ENCODE measurements at regions of chr3 and their contacts with region 1.

Region 1: GRCh38 chr3:50611464-50612233 is at the start of gene CISH:
- DNase-seq: peak; percentile 90 to 92 (median 92)
- H3K4me3 ChIP-seq: peak within 1 kb of the TSS; percentile 98
- H3K4me3 Mint-ChIP-seq: peak within 1 kb of the TSS; percentile 82 to 97 (median 97)
- H3K27ac ChIP-seq: peak within 1 kb of the TSS; percentile 84
- H3K27ac Mint-ChIP-seq: peak within 1 kb of the TSS; percentile 91 to 99 (median 95)
- H3K4me1 ChIP-seq: peaks cover 61% of the 10 kb centered on the region
- H3K4me1 Mint-ChIP-seq: peaks cover 69 to 81% (median 73%) of the 10 kb centered on the region in 3 donors
- H3K27me3 ChIP-seq: no peaks in the 10 kb centered on the region
- H3K27me3 Mint-ChIP-seq: no peaks in the 10 kb centered on the region
- total RNA-seq, gene CISH: 216 to 222 TPM

Region 2: GRCh38 chr3:50568947-50569749 is 42.5 kb before region 1 on chr3 and contains the start of gene HEMK1:
- CTCF ChIA-PET with region 1: interaction called, 724 read pairs
- POLR2A ChIA-PET with region 1: interaction called, 57 read pairs
- DNase-seq: peak; percentile 92 to 95 (median 92)
- H3K4me3 ChIP-seq: peak within 1 kb of the TSS; percentile 92
- H3K4me3 Mint-ChIP-seq: peak within 1 kb of the TSS; percentile 90 to 97 (median 95)
- H3K27ac ChIP-seq: peak within 1 kb of the TSS; percentile 82
- H3K27ac Mint-ChIP-seq: peak within 1 kb of the TSS; percentile 91 to 98 (median 96)
- H3K4me1 ChIP-seq: peaks cover 67% of the 10 kb centered on the region
- H3K4me1 Mint-ChIP-seq: peaks cover 54 to 85% (median 58%) of the 10 kb centered on the region in 3 donors
- H3K27me3 ChIP-seq: no peaks in the 10 kb centered on the region
- H3K27me3 Mint-ChIP-seq: peaks cover 0 to 4% of the 10 kb centered on the region in 2 donors
- total RNA-seq, gene HEMK1: 51.8 to 55.0 TPM

Region 3: DNA sequence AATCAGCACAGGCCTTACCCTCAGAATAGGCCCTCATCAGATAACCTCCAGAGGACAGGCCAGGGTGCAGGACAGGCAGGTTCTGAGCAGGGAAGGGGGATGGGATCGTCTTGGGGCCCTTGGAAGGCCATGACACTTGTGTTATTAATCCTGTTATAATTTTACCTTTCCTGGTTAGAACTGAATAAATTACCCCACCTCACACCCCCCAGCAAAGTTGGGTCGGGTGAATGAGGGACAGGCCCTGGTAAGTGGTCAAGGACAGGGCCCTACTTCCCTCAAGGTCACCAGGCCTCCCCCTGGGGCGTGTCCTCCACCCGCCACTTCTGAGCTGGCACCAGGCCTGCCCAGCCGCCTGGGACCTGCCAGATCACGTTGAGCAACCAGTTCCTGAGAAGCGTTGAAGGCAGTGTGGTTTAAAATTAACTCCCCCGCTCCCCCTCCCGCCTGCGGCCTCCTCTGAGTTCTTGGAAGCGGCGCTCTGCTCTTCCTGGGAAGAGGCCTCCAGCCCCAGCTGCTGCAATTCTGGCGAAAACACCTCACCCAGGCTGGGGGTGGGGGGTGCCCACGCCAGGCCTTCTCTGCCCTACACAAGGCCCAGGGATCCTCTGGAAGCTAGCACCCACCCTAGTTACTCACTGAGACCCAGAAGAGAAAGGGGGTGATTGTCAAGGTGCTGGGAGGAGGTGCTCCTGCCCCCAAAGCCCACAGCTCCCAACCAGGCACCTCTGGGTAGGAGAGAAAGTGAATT is 10.6 kb before region 1 on chr3:
- CTCF ChIA-PET with region 1: interaction called, 33 read pairs
- POLR2A ChIA-PET with region 1: interaction called, 35 read pairs
- DNase-seq: peak; percentile 52 to 79 (median 57)
- H3K4me3 ChIP-seq: peak overlapping the region; percentile 26
- H3K4me3 Mint-ChIP-seq: peak overlapping the region; percentile 48 to 81 (median 76)
- H3K27ac ChIP-seq: peak overlapping the region; percentile 84
- H3K27ac Mint-ChIP-seq: peak overlapping the region; percentile 90 to 98 (median 96)
- H3K4me1 ChIP-seq: peaks cover 79% of the 10 kb centered on the region
- H3K4me1 Mint-ChIP-seq: peaks cover 68 to 83% (median 78%) of the 10 kb centered on the region in 3 donors
- H3K27me3 ChIP-seq: no peaks in the 10 kb centered on the region
- H3K27me3 Mint-ChIP-seq: no peaks in the 10 kb centered on the region

Region 4: GRCh38 chr3:50632450-50632849 is 20.8 kb after region 1 on chr3:
- CTCF ChIA-PET with region 1: interaction called, 15 read pairs
- POLR2A ChIA-PET with region 1: interaction called, 4 read pairs
- DNase-seq: no peak
- H3K4me3 ChIP-seq: no peak overlapping the region
- H3K4me3 Mint-ChIP-seq: peak overlapping the region in 6 of 7 donors; percentile 6 to 76 (median 26)
- H3K27ac ChIP-seq: no peak overlapping the region
- H3K27ac Mint-ChIP-seq: peak overlapping the region; percentile 27 to 89 (median 82)
- H3K4me1 ChIP-seq: peaks cover 77% of the 10 kb centered on the region
- H3K4me1 Mint-ChIP-seq: peaks cover 73 to 90% (median 83%) of the 10 kb centered on the region in 3 donors
- H3K27me3 ChIP-seq: no peaks in the 10 kb centered on the region
- H3K27me3 Mint-ChIP-seq: no peaks in the 10 kb centered on the region

Region 5: DNA sequence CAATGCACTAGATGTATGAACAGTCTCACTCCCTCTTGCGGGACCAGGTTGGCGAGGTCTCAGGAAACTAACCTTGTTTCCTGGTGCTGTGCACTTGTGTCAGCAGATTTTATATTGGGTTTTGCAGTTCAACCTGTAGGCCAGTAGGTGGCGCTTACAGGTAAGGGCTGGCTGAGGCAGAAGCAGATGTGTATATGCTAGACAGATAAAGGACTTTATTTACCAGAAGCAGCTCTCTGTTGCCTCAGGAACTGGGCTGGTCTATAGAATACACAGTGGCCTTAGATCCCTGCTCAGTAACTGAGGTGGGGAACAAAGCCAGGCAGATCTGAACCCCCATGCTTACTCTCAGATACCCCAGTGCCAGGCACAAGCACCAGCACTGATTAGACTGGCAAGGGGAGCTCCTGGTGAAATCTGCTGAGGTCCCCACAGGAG is 359.9 kb after region 1 on chr3:
- CTCF ChIA-PET with region 1: interaction called, 11 read pairs
- POLR2A ChIA-PET with region 1: no interaction called
- DNase-seq: peak; percentile 28 to 74 (median 72)
- H3K4me3 ChIP-seq: no peak overlapping the region
- H3K4me3 Mint-ChIP-seq: peak overlapping the region in 3 of 7 donors; percentile 16 to 56 (median 28)
- H3K27ac ChIP-seq: no peak overlapping the region
- H3K27ac Mint-ChIP-seq: peak overlapping the region in 5 of 8 donors; percentile 40 to 79 (median 77)
- H3K4me1 ChIP-seq: peaks cover 14% of the 10 kb centered on the region
- H3K4me1 Mint-ChIP-seq: peaks cover 21 to 24% (median 24%) of the 10 kb centered on the region in 3 donors
- H3K27me3 ChIP-seq: no peaks in the 10 kb centered on the region
- H3K27me3 Mint-ChIP-seq: no peaks in the 10 kb centered on the region

Region 6: GRCh38 chr3:51391075-51391567 is 779.5 kb after region 1 on chr3 and contains the start of gene RBM15B:
- CTCF ChIA-PET with region 1: interaction called, 12 read pairs
- POLR2A ChIA-PET with region 1: no interaction called
- DNase-seq: peak; percentile 96 to 98 (median 97)
- H3K4me3 ChIP-seq: peak within 1 kb of the TSS; percentile 56
- H3K4me3 Mint-ChIP-seq: peak within 1 kb of the TSS; percentile 79 to 93 (median 83)
- H3K27ac ChIP-seq: peak within 1 kb of the TSS; percentile 61
- H3K27ac Mint-ChIP-seq: peak within 1 kb of the TSS; percentile 88 to 96 (median 92)
- H3K4me1 ChIP-seq: peaks cover 71% of the 10 kb centered on the region
- H3K4me1 Mint-ChIP-seq: peaks cover 54 to 81% (median 66%) of the 10 kb centered on the region in 3 donors
- H3K27me3 ChIP-seq: no peaks in the 10 kb centered on the region
- H3K27me3 Mint-ChIP-seq: no peaks in the 10 kb centered on the region
- total RNA-seq, gene RBM15B: 47.4 to 47.8 TPM

Region 7: DNA sequence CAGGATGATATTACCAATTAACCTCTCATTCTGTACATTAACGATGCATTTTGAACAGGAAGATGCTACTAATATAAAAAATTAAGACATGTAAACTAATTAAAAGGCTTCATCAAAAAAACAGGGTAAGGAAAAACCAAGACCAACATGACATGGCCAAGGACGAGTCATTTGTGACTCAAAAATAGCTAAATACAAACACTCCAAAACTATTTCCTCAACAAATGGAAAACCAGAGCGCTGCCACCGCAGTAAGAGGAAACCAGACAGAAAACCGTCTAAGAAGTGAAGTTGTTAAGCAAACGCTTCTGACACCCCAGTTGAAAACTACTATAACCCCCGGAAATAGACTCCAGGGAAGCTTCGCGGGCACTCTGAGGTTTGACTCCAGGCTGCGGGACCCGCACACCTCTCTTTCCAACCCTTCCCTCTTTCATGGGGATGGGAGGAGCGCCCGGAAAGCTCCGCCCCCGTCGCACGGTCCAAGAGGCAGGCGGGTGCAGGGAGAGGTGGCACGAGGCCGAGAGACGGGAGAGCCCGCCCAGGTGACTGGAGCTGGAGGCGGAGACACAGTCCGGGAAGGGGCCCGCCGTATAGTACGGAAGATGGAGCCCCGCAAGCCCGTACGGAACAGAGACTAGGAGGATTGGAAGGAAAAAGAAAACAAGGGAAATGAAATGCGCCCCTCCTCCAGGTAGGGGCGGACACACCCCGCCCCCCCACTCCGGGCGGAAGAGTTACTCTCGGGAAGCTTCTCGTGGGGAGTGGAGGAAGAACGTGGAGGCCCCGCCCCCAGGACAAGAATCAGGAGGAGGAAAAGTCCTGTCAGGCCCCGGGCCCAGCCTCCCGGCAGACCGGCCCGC is 887.5 kb after region 1 on chr3:
- CTCF ChIA-PET with region 1: interaction called, 3 read pairs
- POLR2A ChIA-PET with region 1: interaction called, 10 read pairs
- DNase-seq: peak; percentile 73 to 87 (median 78)
- H3K4me3 ChIP-seq: peak overlapping the region; percentile 86
- H3K4me3 Mint-ChIP-seq: peak overlapping the region; percentile 87 to 94 (median 91)
- H3K27ac ChIP-seq: peak overlapping the region; percentile 86
- H3K27ac Mint-ChIP-seq: peak overlapping the region; percentile 91 to 99 (median 98)
- H3K4me1 ChIP-seq: peaks cover 11% of the 10 kb centered on the region
- H3K4me1 Mint-ChIP-seq: peaks cover 18 to 36% (median 34%) of the 10 kb centered on the region in 3 donors
- H3K27me3 ChIP-seq: no peaks in the 10 kb centered on the region
- H3K27me3 Mint-ChIP-seq: peaks cover 0 to 5% of the 10 kb centered on the region in 2 donors

Measured in CD8-positive, alpha-beta memory T cell (primary cell).